Mammary epithelial cell (primary cell): ENCODE measurements at regions of chr19 and their contacts with region 1.

Region 1: GRCh38 chr19:3304871-3305423 is 61.4 kb upstream of the NFIC start:
- DNase-seq: peak; percentile 41
- H3K4me3 ChIP-seq: no peak overlapping the region
- H3K27ac ChIP-seq: no peak overlapping the region
- H3K4me1 ChIP-seq: no peaks in the 10 kb centered on the region
- H3K27me3 ChIP-seq: no peaks in the 10 kb centered on the region
- CTCF ChIP-seq: peak; percentile 78 to 85

Region 2: DNA sequence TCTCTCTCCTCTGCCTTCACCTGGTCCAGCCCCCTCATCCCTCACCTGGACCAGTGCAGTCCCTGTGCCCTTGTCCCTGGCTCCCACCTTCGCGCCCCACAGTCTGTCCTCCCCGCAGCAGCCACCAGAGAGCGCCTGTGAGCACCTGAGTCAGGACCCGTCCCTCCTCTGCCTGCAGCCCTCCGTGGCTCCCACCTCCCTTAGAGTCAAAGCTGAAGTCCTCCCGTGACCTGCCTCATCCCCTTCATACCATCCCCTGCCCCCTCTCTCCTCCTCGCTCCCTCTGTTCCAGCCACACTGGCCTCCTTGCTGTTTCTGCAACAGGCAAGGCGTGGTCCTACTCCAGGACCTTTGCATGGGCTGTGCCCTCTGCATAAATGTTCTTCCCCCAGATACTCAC is 70.1 kb before region 1 on chr19:
- CTCF ChIA-PET with region 1: no interaction called
- dilution Hi-C with region 1: loop called (anchors 5 kb)
- in situ Hi-C with region 1: no loop called
- intact Hi-C with region 1: no loop called
- DNase-seq: no peak
- H3K4me3 ChIP-seq: no peak overlapping the region
- H3K27ac ChIP-seq: no peak overlapping the region
- H3K4me1 ChIP-seq: no peaks in the 10 kb centered on the region
- H3K27me3 ChIP-seq: no peaks in the 10 kb centered on the region
- CTCF ChIP-seq: peak; percentile 28 to 36

Region 3: GRCh38 chr19:3471954-3472655 is 167.2 kb after region 1 on chr19:
- CTCF ChIA-PET with region 1: no interaction called
- dilution Hi-C with region 1: no loop called
- in situ Hi-C with region 1: no loop called
- intact Hi-C with region 1: loop called (anchors 1 kb)
- DNase-seq: no peak
- H3K4me3 ChIP-seq: no peak overlapping the region
- H3K27ac ChIP-seq: no peak overlapping the region
- H3K4me1 ChIP-seq: no peaks in the 10 kb centered on the region
- H3K27me3 ChIP-seq: no peaks in the 10 kb centered on the region
- CTCF ChIP-seq: peak; percentile 53 to 85

Region 4: GRCh38 chr19:3626473-3627350 is 321.8 kb after region 1 on chr19 and contains the start of gene CACTIN:
- CTCF ChIA-PET with region 1: no interaction called
- dilution Hi-C with region 1: loop called (anchors 5 kb)
- in situ Hi-C with region 1: no loop called
- intact Hi-C with region 1: loop called (anchors 10 kb)
- DNase-seq: peak; percentile 96
- H3K4me3 ChIP-seq: peak within 1 kb of the TSS; percentile 69 to 98 (median 91)
- H3K27ac ChIP-seq: peak within 1 kb of the TSS; percentile 75
- H3K4me1 ChIP-seq: peaks cover 13% of the 10 kb centered on the region
- H3K27me3 ChIP-seq: no peaks in the 10 kb centered on the region
- CTCF ChIP-seq: no peak
- total RNA-seq, gene CACTIN: 16.0 to 26.5 TPM